Colonic mucosa (tissue), 4 donors: ENCODE measurements at regions of chr15 and their contacts with region 1.

Region 1: DNA sequence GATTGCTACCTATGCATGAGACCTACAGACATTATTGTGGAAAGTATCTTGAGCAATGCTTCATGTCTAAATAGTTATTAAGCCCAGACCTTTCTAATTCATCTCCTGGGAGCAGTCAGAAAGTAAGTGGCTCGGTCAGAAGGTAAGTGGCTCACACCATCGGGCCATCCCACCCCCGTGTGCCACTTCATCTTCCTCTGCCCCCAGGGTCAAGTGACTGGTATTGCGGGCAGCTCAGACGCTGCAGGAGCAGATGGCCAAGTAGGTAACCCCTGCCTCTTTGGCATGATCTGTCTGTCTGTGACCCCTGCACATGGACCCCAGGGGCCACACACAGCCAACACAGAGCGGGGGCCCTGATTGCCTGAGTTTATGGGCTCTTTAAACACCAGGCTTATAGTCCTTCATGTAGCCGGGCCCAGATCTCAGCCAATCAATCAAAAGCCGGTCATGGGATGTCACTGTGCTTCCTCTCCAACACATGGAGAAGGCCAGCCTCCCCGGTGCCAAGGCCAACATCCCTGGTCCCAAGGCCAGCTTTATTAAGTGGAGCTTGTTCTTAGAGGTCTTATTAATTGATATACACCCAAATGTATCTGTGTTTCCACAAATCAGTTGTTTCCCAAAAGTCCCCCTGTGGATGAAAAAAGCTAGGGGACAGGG is 42.9 kb downstream of the LARP6 start:
- DNase-seq: no peak
- H3K4me3 ChIP-seq: no peak overlapping the region
- H3K27ac ChIP-seq: no peak overlapping the region
- H3K4me1 ChIP-seq: no peaks in the 10 kb centered on the region
- H3K27me3 ChIP-seq: no peaks in the 10 kb centered on the region
- CTCF ChIP-seq: no peak

Region 2: GRCh38 chr15:70679919-70680231 is 131.2 kb before region 1 on chr15:
- intact Hi-C with region 1: loop called (anchors 2 kb)
- DNase-seq: no peak
- H3K4me3 ChIP-seq: no peak overlapping the region
- H3K27ac ChIP-seq: no peak overlapping the region
- H3K4me1 ChIP-seq: no peaks in the 10 kb centered on the region
- H3K27me3 ChIP-seq: no peaks in the 10 kb centered on the region
- CTCF ChIP-seq: no peak

Region 3: DNA sequence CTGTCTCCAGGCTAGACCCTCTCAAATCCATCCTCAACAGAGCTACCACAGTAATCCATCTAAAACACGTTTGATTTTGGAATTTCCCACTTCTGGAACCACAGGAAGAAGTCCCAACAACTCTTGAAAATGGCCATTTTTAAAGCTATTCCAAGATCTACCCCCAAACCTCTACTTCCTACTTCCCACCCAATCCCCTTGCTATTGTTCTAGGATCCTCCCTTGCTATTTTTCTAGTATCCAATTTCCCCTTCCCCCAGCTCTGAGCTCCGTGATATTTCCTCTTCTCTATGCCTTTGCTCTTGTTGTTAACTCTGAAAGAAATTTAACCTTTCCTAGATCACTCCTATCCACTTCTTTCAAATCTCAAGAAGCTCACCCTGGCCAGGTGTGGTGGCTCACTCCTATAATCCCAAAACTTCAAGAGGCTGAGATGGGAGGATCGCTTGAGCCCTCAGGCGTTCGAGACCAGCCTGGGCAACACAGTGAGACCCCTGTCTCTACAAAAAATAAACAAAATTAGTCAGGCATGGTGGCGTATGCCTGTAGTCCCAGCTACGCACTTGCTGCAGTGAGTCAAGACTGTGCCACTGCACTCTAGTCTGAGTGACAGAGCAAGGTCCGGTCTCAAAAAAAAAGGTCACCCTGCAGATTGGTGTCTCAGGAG is 60.7 kb before region 1 on chr15:
- intact Hi-C with region 1: loop called (anchors 2 kb)
- DNase-seq: no peak
- H3K4me3 ChIP-seq: no peak overlapping the region
- H3K27ac ChIP-seq: no peak overlapping the region
- H3K4me1 ChIP-seq: no peaks in the 10 kb centered on the region
- H3K27me3 ChIP-seq: no peaks in the 10 kb centered on the region
- CTCF ChIP-seq: no peak